ENCODE measurements at regions of chr1 and their contacts with region 1.

Region 1: DNA sequence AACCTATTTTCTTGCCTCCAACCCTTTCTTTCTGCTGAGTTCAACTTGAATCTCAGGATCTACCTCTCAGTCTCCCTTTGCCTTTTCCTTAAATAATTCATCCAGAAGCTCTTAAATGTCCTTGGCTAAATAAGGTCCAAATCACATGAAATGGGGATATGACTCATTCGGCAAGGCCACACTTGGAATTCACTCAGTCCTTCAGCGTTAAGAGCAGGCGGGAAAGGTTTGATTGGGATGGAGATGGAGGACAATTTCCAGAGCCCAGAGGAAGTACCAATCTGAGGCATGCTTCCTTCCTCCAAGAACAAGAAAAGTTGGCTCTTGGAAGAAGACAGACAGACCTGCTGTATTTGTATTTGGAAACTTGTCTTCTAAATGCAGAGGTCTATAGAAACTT is 128.5 kb downstream of the PROX1 start:
- DNase-seq: no peak
- ATAC-seq: no peak
- H3K4me3 ChIP-seq: no peak overlapping the region
- H3K27ac ChIP-seq: no peak overlapping the region
- H3K4me1 ChIP-seq: no peaks in the 10 kb centered on the region
- H3K27me3 ChIP-seq: no peaks in the 10 kb centered on the region
- CTCF ChIP-seq: no peak

Region 2: DNA sequence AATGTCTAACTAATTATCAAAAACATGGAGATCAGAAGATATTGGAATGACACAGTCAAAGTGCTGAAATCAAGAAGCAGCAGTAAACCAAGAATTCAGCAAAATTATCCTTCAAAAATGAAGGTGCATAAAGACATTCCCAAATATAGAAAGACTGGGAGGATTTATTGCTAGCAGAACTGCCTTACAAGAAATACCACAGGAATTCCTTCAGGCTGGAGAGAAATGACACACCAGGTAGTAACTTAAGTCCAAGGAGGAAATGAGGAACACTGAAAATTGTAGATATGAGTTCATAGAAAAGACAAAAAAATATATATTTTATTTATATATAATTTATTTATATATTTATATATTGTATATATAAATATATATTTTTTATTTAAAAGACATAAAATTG is 848.0 kb before region 1 on chr1:
- intact Hi-C with region 1: no loop called
- DNase-seq: no peak
- ATAC-seq: no peak
- H3K4me3 ChIP-seq: no peak overlapping the region
- H3K27ac ChIP-seq: no peak overlapping the region
- H3K4me1 ChIP-seq: no peaks in the 10 kb centered on the region
- H3K27me3 ChIP-seq: no peaks in the 10 kb centered on the region
- CTCF ChIP-seq: no peak

Region 3: GRCh38 chr1:213374369-213374768 is 741.9 kb before region 1 on chr1:
- intact Hi-C with region 1: loop called in 1 of 3 experiments (anchors 10 kb)
- DNase-seq: peak; percentile 51 to 93 (median 72)
- ATAC-seq: peak; percentile 80 to 93 (median 92)
- H3K4me3 ChIP-seq: no peak overlapping the region
- H3K27ac ChIP-seq: no peak overlapping the region
- H3K4me1 ChIP-seq: no peaks in the 10 kb centered on the region
- H3K27me3 ChIP-seq: no peaks in the 10 kb centered on the region
- CTCF ChIP-seq: peak; percentile 68 to 87 (median 82)

Region 4: DNA sequence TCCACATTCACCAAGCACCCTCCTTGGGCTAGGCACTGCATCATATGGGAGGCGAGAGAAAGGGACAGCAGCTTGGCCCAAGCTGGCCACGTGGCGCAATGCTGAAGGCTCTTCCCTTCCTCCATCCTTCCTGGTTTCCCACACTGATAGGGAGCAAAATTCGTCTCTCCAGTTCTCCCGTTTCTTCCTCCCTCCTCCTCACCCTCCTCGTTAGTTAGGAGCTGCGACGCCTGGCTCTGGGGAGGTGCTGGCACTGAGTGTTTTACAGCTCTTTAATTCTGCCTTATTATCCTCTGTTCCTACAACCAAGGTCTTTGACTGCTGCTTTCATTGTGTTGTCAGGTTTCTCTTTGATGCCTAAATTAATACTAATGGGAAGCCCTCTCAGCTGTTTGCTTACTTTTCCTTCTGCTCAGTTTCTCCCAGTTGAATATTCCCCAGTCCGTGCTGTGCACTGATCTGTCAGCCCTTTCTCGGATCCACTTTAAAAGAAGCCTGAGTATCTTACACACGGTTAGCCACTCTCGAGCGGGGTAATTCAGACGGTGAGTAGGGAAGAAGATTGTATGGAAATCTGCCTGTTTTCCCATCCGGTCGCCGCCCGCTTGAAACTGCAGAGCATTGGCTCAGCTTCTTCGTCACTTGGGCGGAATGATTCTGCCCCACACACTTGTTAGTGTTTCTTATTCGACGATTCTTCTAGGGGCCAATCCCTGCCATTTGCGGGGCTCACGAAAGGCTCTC is 108.5 kb after region 1 on chr1:
- intact Hi-C with region 1: no loop called
- DNase-seq: no peak
- ATAC-seq: peak; percentile 60 to 70 (median 64)
- H3K4me3 ChIP-seq: peak overlapping the region in 2 of 4 donors; percentile 25 to 35
- H3K27ac ChIP-seq: no peak overlapping the region
- H3K4me1 ChIP-seq: no peaks in the 10 kb centered on the region
- H3K27me3 ChIP-seq: no peaks in the 10 kb centered on the region
- CTCF ChIP-seq: no peak

Measured in pancreas (tissue), 10 donors.